K562 (cell line): ENCODE measurements at regions of chr1 and their contacts with region 1.

Region 1: GRCh38 chr1:166875734-166876539 is at the start of gene TADA1:
- DNase-seq: peak; percentile 96 to 100 (median 96)
- ATAC-seq: peak; percentile 95
- H3K4me3 ChIP-seq: peak within 1 kb of the TSS; percentile 68
- H3K27ac ChIP-seq: peak within 1 kb of the TSS; percentile 83
- H3K4me1 ChIP-seq: peaks cover 15 to 19% of the 10 kb centered on the region in 2 experiments; a peak in 4 of 5 replicates
- H3K27me3 ChIP-seq: no peaks in the 10 kb centered on the region
- CTCF ChIP-seq: peak in 2 of 3 experiments; percentile 50 to 67; a peak in 2 of 6 replicates
- EP300 ChIP-seq: peak; percentile 51; the same call in 1 of the 2 replicates
- POLR2A ChIP-seq: peak; percentile 84
- RAD21 ChIP-seq: peak; percentile 28 to 35; a peak in 3 of 4 replicates
- polyA plus RNA-seq, gene TADA1: 62.6 to 76.5 TPM

Region 2: DNA sequence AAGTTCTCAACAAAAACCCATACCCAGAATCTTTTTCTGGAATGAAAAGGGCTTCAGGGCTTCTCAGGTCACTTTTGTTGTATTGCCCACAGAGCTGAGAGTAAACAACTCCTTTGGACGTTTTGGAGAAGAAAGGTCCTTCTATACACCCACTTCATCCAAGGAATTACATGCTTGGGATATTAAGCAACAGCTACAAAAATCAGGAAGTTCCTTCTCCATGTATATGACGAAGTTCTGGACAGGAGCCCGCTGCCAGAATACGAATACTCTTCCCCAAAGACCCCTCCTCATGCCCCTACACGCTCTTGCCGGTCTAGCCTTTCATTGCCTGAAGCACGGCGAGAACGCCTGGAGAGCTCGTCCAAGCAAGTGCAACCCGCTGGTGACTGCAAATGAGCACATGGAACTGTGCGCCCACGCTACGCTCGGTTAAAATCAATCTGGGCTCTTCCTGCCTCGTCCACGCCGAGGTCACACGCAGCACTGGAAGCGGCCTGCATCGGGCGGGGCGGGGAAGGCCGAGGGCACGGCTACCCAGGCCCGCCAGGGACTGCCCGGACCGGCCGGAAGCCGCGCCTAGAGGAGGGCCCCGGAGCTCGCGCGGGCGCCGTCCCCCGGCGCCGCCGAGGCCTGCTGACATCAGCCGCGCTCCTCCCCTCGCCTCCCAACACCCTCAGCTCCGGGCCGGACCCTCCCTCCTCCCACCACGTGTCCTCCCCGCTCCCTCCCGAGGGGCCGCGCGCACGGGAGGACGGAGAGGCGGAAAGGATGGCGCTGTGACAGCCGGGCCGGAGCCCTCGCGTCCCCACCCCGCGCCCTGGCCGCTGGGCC is 37.0 kb before region 1 on chr1 and contains the start of gene POGK:
- CTCF ChIA-PET with region 1: no interaction called
- POLR2A ChIA-PET with region 1: interaction called, 4 read pairs
- in situ Hi-C with region 1: no loop called
- intact Hi-C with region 1: loop called (anchors 2 kb)
- DNase-seq: peak; percentile 93 to 95 (median 94)
- ATAC-seq: peak; percentile 97
- H3K4me3 ChIP-seq: peak within 1 kb of the TSS; percentile 58
- H3K27ac ChIP-seq: peak within 1 kb of the TSS; percentile 83
- H3K4me1 ChIP-seq: peaks cover 20 to 26% of the 10 kb centered on the region in 2 experiments
- H3K27me3 ChIP-seq: no peaks in the 10 kb centered on the region
- CTCF ChIP-seq: peak in 2 of 3 experiments; percentile 8 to 10; a peak in 2 of 6 replicates
- EP300 ChIP-seq: peak; percentile 30
- POLR2A ChIP-seq: peak; percentile 90
- RAD21 ChIP-seq: no peak
- polyA plus RNA-seq, gene POGK: 6.1 to 8.1 TPM

Region 3: DNA sequence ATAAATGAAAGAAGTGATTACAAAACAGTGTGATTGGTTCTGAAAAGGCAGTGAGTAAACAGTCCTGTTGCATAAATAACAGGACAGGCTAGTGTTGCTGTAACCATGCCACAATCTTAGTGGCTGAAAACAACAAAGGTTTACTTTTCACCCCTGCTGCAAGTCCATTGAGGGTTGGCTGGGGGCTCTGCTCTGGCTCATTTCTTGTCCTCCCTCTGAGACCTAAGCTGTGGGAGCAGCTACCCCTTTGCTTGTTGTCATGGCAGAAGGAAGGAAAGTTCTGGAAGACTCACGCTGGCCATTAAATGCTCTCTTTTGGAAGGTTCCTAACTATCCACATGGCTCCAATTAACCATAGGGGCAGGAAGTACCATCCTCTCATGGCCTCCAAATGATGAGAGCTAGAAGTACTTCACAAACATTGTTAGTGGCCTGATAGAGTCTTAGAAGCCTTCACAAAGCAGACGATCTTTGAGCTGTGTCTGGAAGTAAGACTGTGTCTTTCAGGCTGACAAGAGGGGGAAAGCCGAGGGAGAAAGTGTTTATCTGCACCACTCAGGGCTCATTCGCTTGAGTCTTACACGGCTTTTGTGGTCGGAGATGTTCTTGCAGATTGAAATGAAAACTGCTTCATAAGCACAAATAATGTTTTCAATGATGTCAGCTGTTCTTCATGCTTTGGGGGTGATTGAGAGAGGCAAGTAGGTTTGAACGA is 766.0 kb after region 1 on chr1:
- CTCF ChIA-PET with region 1: no interaction called
- POLR2A ChIA-PET with region 1: no interaction called
- in situ Hi-C with region 1: no loop called
- intact Hi-C with region 1: no loop called
- DNase-seq: peak in 2 of 4 experiments; percentile 63 to 79
- ATAC-seq: peak; percentile 75
- H3K4me3 ChIP-seq: no peak overlapping the region
- H3K27ac ChIP-seq: peak overlapping the region; percentile 57
- H3K4me1 ChIP-seq: peaks cover 9 to 38% of the 10 kb centered on the region in 2 experiments; a peak in 4 of 5 replicates
- H3K27me3 ChIP-seq: no peaks in the 10 kb centered on the region
- CTCF ChIP-seq: no peak
- EP300 ChIP-seq: peak; percentile 13; the same call in 1 of the 2 replicates
- POLR2A ChIP-seq: 0 out of 2 replicates have a peak, but pooled peaks have one; percentile 42
- RAD21 ChIP-seq: no peak